ENCODE measurements at regions of chr5 and their contacts with region 1.

Region 1: GRCh38 chr5:110580625-110581024 is 145.8 kb downstream of the TMEM232 start:
- DNase-seq: no peak
- H3K4me3 ChIP-seq: no peak overlapping the region
- H3K4me3 Mint-ChIP-seq: no peak overlapping the region
- H3K27ac Mint-ChIP-seq: no peak overlapping the region
- H3K4me1 ChIP-seq: no peaks in the 10 kb centered on the region
- H3K4me1 Mint-ChIP-seq: no peaks in the 10 kb centered on the region
- H3K27me3 ChIP-seq: no peaks in the 10 kb centered on the region
- H3K27me3 Mint-ChIP-seq: peaks cover 5% of the 10 kb centered on the region
- CTCF ChIP-seq: no peak

Region 2: DNA sequence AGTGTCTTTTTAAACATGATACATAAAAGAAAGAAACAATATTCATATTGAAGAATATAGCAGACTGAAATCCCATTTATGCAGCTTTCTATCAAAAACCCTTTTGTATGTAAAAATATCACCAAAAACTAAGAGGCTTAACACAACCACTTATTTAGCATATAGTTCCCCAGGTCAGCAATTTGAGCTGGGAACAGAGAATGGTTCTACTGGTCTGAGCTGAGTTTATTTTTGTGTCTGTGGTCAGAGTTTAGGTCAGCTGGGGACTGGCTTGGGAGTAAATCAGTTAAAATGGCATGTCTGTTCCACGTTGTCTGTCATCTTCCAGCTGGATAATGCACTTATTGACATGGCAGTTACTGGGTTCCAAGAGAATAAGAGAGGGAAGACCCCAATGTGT is 19.1 kb before region 1 on chr5:
- CTCF ChIA-PET with region 1: no interaction called
- POLR2A ChIA-PET with region 1: no interaction called
- intact Hi-C with region 1: loop called (anchors 2 kb)
- DNase-seq: no peak
- H3K4me3 ChIP-seq: no peak overlapping the region
- H3K4me3 Mint-ChIP-seq: no peak overlapping the region
- H3K27ac Mint-ChIP-seq: no peak overlapping the region
- H3K4me1 ChIP-seq: no peaks in the 10 kb centered on the region
- H3K4me1 Mint-ChIP-seq: no peaks in the 10 kb centered on the region
- H3K27me3 ChIP-seq: no peaks in the 10 kb centered on the region
- H3K27me3 Mint-ChIP-seq: no peaks in the 10 kb centered on the region
- CTCF ChIP-seq: no peak

Measured in Caco-2 (cell line).